ENCODE measurements at regions of chr17 and their contacts with region 1.

Region 1: GRCh38 chr17:17972126-17972951 is at the starts of genes DRC3 and TOM1L2:
- DNase-seq: peak; percentile 100
- H3K4me3 ChIP-seq: peak within 1 kb of the TSS; percentile 50 to 82 (median 55)
- H3K4me3 Mint-ChIP-seq: peak within 1 kb of the TSS; percentile 83 to 93
- H3K27ac ChIP-seq: peak within 1 kb of the TSS; percentile 42 to 95
- H3K27ac Mint-ChIP-seq: peak within 1 kb of the TSS; percentile 90 to 98 (median 95)
- H3K4me1 ChIP-seq: peaks cover 58 to 60% of the 10 kb centered on the region in 2 donors
- H3K4me1 Mint-ChIP-seq: peaks cover 59% of the 10 kb centered on the region
- H3K27me3 ChIP-seq: no peaks in the 10 kb centered on the region
- H3K27me3 Mint-ChIP-seq: no peaks in the 10 kb centered on the region
- CTCF ChIP-seq: no peak
- polyA plus RNA-seq, gene DRC3: 0.23 to 0.58 (median 0.39) TPM
- polyA plus RNA-seq, gene TOM1L2: 1.7 to 28.2 (median 2.8) TPM

Region 2: GRCh38 chr17:17919169-17920107 is 52.9 kb before region 1 on chr17:
- intact Hi-C with region 1: no loop called
- DNase-seq: peak; percentile 31 to 58 (median 38)
- H3K4me3 ChIP-seq: no peak overlapping the region
- H3K4me3 Mint-ChIP-seq: no peak overlapping the region
- H3K27ac ChIP-seq: peak overlapping the region in 1 of 2 donors; percentile 3
- H3K27ac Mint-ChIP-seq: peak overlapping the region in 1 of 7 donors; percentile 19
- H3K4me1 ChIP-seq: peaks cover 8 to 23% of the 10 kb centered on the region in 2 donors
- H3K4me1 Mint-ChIP-seq: peaks cover 24% of the 10 kb centered on the region
- H3K27me3 ChIP-seq: no peaks in the 10 kb centered on the region
- H3K27me3 Mint-ChIP-seq: peaks cover 0 to 3% (median 2%) of the 10 kb centered on the region in 3 donors
- CTCF ChIP-seq: peak; percentile 65

Region 3: DNA sequence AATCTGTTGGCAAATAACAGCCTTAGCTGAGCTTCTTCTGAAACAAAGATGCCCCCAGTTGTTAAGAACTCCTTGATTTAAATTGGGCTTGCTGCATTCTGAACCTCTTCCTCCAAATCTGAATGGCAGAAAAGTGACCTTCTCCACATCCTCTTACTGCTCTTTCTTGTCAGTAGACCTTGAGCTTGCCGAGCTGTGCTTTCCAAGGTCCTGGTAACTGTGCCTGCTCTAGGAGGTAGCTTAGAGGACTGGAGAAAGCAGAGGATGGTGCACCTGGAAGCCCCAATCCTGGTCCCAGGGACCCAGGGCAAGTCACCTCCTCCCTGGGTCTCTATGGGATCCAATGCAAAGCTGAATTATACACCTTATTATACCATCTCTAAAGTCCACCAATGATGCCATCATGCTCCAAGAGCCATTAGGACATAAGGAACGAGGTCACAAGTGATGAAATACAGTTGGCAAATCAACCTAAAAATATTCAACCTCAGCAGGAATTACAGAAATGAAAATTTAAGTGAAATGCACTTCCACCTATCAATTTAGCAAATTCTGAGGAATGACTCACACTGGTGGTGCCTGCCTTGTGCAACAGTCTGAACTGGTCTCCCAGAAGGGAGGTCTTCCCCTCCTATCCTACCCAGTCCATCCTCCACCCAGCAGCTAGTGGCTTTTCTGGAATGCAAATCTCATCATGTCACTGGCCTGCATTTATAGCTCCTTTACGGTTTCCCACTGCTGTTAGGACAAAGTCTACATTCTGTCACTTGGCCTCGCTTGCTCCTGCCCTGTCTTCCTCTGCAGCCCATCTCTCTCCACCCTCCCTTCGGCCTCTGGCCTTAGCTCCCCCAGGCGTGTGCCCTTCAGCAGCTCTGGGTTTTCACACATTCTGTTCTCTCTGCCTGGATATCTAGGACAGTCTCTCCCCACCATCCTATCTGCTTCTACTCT is 36.7 kb before region 1 on chr17:
- intact Hi-C with region 1: loop called (anchors 5 kb)
- DNase-seq: peak; percentile 89 to 94 (median 92)
- H3K4me3 ChIP-seq: peak overlapping the region in 1 of 3 experiments; percentile 29
- H3K4me3 Mint-ChIP-seq: peak overlapping the region; percentile 31 to 63
- H3K27ac ChIP-seq: peak overlapping the region; percentile 78 to 81
- H3K27ac Mint-ChIP-seq: peak overlapping the region; percentile 91 to 98 (median 96)
- H3K4me1 ChIP-seq: peaks cover 31 to 46% of the 10 kb centered on the region in 2 donors
- H3K4me1 Mint-ChIP-seq: peaks cover 55% of the 10 kb centered on the region
- H3K27me3 ChIP-seq: no peaks in the 10 kb centered on the region
- H3K27me3 Mint-ChIP-seq: peaks cover 0 to 2% (median 0%) of the 10 kb centered on the region in 3 donors
- CTCF ChIP-seq: no peak

Region 4: DNA sequence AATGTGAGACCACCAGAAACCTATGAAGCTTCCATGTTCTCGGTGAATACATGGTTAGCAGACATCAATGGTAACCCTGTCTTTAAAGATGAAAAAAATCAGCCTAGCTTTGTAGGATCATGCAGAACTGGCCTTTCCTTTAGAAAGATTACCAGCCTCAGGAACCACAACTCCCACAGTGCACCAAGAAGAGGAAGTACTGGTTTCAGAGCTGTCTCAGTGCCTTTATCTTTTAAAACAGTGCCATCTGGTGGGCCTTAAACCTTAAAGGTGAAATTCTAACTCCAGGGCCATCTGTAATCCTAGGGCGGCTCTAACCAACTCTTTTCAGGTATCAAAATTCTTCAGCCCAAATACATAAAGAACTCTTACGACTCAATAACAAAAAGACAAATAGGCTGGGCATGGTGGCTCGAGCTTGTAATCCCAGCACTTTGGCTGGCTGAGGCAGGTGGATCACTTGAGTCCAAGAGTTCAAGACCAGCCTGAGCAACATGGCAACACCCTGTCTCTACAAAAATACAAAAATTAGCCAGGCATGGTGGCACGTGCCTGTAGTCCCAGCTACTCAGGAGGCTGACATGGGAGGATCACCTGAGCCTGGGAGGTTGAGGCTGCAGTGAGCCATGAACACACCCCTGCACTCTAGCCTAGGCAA is 61.2 kb after region 1 on chr17:
- intact Hi-C with region 1: loop called (anchors 2 kb)
- DNase-seq: peak; percentile 77 to 90 (median 85)
- H3K4me3 ChIP-seq: no peak overlapping the region
- H3K4me3 Mint-ChIP-seq: no peak overlapping the region
- H3K27ac ChIP-seq: peak overlapping the region in 1 of 2 donors; percentile 36
- H3K27ac Mint-ChIP-seq: peak overlapping the region; percentile 69 to 85 (median 77)
- H3K4me1 ChIP-seq: peaks cover 34 to 44% of the 10 kb centered on the region in 2 donors
- H3K4me1 Mint-ChIP-seq: peaks cover 46% of the 10 kb centered on the region
- H3K27me3 ChIP-seq: no peaks in the 10 kb centered on the region
- H3K27me3 Mint-ChIP-seq: no peaks in the 10 kb centered on the region
- CTCF ChIP-seq: peak; percentile 74

Region 5: DNA sequence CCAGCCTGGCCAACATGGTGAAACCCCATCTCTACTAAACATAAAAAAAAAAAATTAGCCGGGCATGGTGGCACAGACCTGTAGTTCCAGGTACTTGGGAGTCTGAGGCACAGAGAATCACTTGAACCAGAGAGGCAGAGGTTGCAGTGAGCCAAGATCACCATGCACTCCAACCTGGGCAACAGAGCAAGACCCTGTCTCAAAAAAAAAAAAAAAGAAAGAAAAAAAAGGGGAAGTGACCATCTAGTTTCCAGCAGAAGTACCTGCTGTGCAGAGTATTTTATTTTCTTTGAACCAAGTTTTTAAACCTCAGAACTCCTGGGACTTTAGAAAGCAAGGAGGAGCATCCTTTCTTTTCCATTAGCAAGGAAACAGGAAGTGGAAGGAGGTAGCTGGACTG is 73.4 kb after region 1 on chr17:
- intact Hi-C with region 1: no loop called
- DNase-seq: no peak
- H3K4me3 ChIP-seq: no peak overlapping the region
- H3K4me3 Mint-ChIP-seq: no peak overlapping the region
- H3K27ac ChIP-seq: no peak overlapping the region
- H3K27ac Mint-ChIP-seq: peak overlapping the region in 1 of 7 donors; percentile 7
- H3K4me1 ChIP-seq: peaks cover 2% of the 10 kb centered on the region in 2 donors
- H3K4me1 Mint-ChIP-seq: peaks cover 18% of the 10 kb centered on the region
- H3K27me3 ChIP-seq: no peaks in the 10 kb centered on the region
- H3K27me3 Mint-ChIP-seq: no peaks in the 10 kb centered on the region
- CTCF ChIP-seq: no peak

Region 6: DNA sequence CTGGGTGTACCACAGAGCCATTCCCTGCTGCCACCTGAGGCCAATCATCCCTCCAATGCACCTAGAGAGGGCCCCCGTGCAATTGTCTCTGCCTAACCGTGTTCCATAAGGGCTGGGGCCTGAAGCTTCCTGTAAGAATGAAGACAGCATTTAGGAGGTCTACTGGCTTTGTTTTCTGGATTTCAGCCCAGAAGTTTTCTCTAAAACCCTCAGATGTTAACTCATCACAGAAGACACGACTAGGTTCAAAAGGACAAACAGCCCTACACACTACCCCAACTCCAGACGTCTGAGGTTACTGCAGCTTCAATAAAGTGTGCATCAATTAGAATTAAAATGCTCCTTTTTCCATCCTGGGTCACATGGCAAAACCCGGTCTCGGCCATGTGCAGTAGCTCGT is 104.6 kb after region 1 on chr17:
- intact Hi-C with region 1: no loop called
- DNase-seq: no peak
- H3K4me3 ChIP-seq: no peak overlapping the region
- H3K4me3 Mint-ChIP-seq: no peak overlapping the region
- H3K27ac ChIP-seq: no peak overlapping the region
- H3K27ac Mint-ChIP-seq: no peak overlapping the region
- H3K4me1 ChIP-seq: no peaks in the 10 kb centered on the region
- H3K4me1 Mint-ChIP-seq: no peaks in the 10 kb centered on the region
- H3K27me3 ChIP-seq: no peaks in the 10 kb centered on the region
- H3K27me3 Mint-ChIP-seq: peaks cover 6 to 16% (median 15%) of the 10 kb centered on the region in 3 donors
- CTCF ChIP-seq: no peak

Measured in CD14-positive monocyte (primary cell).